Activated CD8-positive, alpha-beta T cell treated with anti-CD3 and anti-CD28 coated beads for 36 hours (primary cell): ENCODE measurements at regions of chr7 and their contacts with region 1.

Region 1: GRCh38 chr7:18064242-18064838 is 36.7 kb upstream of the PRPS1L1 start:
- DNase-seq: peak; percentile 43
- ATAC-seq: no peak
- H3K4me3 Mint-ChIP-seq: no peak overlapping the region
- H3K27ac Mint-ChIP-seq: no peak overlapping the region
- H3K4me1 Mint-ChIP-seq: no peaks in the 10 kb centered on the region
- H3K27me3 Mint-ChIP-seq: peaks cover 4% of the 10 kb centered on the region
- CTCF ChIP-seq: peak; percentile 19

Region 2: GRCh38 chr7:18320971-18321567 is 256.7 kb after region 1 on chr7:
- CTCF ChIA-PET with region 1: interaction called, 3 read pairs
- POLR2A ChIA-PET with region 1: no interaction called
- intact Hi-C with region 1: loop called (anchors 10 kb)
- DNase-seq: no peak
- ATAC-seq: peak; percentile 58
- H3K4me3 Mint-ChIP-seq: no peak overlapping the region
- H3K27ac Mint-ChIP-seq: no peak overlapping the region
- H3K4me1 Mint-ChIP-seq: no peaks in the 10 kb centered on the region
- H3K27me3 Mint-ChIP-seq: no peaks in the 10 kb centered on the region
- CTCF ChIP-seq: peak; percentile 64